ENCODE measurements at regions of chr14 and their contacts with region 1.

Region 1: DNA sequence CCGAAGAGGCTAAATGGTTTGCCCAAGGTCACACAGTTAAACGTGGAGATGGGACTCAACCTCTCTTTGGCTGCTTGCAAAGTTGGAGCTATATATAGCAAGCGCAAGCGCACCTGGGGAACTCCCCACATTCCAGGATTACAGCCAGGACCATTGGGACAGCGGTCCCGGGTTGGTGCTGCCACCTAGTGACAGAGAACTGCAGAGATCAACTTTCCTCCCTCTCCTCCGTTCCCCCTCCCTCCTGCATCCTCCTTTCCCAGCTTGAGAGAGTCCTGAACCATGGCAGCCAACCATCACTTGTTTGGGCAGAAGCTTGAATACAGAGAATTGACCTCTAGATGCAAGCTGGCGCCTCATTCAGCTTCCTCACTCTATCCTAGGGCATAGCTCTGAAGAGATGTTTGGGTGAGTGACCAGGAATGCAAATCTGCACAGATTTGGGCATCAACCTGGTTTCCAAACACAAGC is 17.4 kb upstream of the FLVCR2 start:
- DNase-seq: peak; percentile 88
- ATAC-seq: peak; percentile 99
- H3K4me3 Mint-ChIP-seq: no peak overlapping the region
- H3K27ac Mint-ChIP-seq: peak overlapping the region; percentile 14; the same call in 1 of the 2 replicates
- H3K4me1 Mint-ChIP-seq: peaks cover 12% of the 10 kb centered on the region
- H3K27me3 Mint-ChIP-seq: peaks cover 2% of the 10 kb centered on the region; the same call in 1 of the 2 replicates
- CTCF ChIP-seq: peak; percentile 68

Region 2: DNA sequence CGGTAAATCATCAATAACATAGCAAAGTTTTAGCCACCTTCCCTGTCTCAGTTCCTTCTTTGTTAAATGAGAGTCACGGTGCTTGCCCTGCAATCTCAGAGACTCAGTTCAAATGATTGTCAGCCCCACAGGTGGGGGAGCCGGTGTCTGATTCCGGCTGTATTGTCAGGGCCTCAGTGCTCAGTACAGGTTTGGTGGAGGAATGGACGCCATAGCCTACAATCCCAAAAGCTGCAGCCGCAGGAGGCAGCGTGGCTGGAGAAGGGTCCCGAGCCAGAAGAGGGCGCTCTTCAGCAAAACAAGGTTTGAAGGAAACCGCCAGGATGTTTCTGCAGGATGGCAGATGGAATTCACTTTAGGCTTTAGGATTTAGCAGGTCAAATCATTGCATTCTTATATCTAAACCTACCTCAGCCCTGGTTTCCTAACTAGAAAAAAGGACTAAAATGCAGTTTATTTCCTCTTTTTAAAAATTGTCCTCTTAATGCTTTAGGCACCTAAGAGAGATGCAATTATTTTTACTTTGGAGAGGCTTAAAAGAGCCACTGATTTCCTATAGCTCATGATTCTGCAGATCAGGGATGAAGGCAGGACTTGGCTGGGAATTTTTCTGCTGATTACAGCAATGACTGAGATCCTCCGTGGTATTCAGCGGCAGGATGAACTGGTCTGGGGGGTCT is 253.2 kb before region 1 on chr14:
- CTCF ChIA-PET with region 1: interaction called, 32 read pairs
- POLR2A ChIA-PET with region 1: no interaction called
- DNase-seq: peak; percentile 94
- ATAC-seq: peak; percentile 74
- H3K4me3 Mint-ChIP-seq: no peak overlapping the region
- H3K27ac Mint-ChIP-seq: no peak overlapping the region
- H3K4me1 Mint-ChIP-seq: peaks cover 16% of the 10 kb centered on the region
- H3K27me3 Mint-ChIP-seq: no peaks in the 10 kb centered on the region
- CTCF ChIP-seq: peak; percentile 66

Region 3: DNA sequence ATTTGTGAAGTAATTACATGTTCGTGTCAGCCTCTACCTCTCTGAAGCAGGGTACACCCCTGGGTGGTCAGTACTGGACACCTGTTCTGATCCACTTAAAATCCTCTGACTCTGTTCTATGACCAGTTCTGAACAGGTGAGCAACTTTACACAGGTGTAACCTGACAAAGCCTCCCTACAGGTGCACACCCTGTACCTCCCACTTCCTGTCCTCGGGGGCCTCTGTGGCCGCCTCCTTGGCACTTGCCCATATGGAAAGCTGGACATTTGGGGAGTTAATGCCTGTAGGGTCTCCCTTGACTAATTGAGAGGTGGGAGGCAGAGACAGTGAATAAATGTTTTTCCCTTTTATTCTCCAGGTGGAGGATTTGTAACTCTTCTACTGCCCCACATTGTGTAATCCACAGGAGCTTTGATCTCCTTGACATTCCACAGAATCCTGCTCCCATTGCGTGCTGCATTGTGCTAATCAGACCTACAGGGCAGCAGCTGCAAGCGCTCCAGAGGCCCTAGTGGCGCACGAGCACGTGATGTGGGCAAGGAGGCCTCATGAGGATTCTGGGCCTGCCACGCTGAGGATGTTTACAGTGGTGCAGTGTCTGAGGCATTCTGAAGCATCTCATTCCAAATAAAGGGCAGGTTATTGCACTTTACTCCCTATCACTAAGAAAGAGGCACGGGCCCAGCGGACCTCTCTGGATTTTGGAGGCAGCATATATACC is 84.6 kb before region 1 on chr14:
- CTCF ChIA-PET with region 1: interaction called, 15 read pairs
- POLR2A ChIA-PET with region 1: interaction called, 3 read pairs
- DNase-seq: peak; percentile 44
- ATAC-seq: peak; percentile 56
- H3K4me3 Mint-ChIP-seq: no peak overlapping the region
- H3K27ac Mint-ChIP-seq: 0 out of 2 replicates have a peak overlapping the region, but pooled peaks have one; percentile 18
- H3K4me1 Mint-ChIP-seq: peaks cover 33% of the 10 kb centered on the region
- H3K27me3 Mint-ChIP-seq: no peaks in the 10 kb centered on the region; the same call in 1 of the 2 replicates
- CTCF ChIP-seq: no peak

Region 4: GRCh38 chr14:75499084-75499875 is 61.7 kb before region 1 on chr14:
- CTCF ChIA-PET with region 1: interaction called, 13 read pairs
- POLR2A ChIA-PET with region 1: no interaction called
- DNase-seq: no peak
- ATAC-seq: no peak
- H3K4me3 Mint-ChIP-seq: no peak overlapping the region
- H3K27ac Mint-ChIP-seq: no peak overlapping the region
- H3K4me1 Mint-ChIP-seq: no peaks in the 10 kb centered on the region
- H3K27me3 Mint-ChIP-seq: no peaks in the 10 kb centered on the region
- CTCF ChIP-seq: no peak

Region 5: GRCh38 chr14:75514673-75515628 is 46.0 kb before region 1 on chr14:
- CTCF ChIA-PET with region 1: interaction called, 87 read pairs
- POLR2A ChIA-PET with region 1: no interaction called
- DNase-seq: peak; percentile 72
- ATAC-seq: peak; percentile 77
- H3K4me3 Mint-ChIP-seq: no peak overlapping the region
- H3K27ac Mint-ChIP-seq: no peak overlapping the region
- H3K4me1 Mint-ChIP-seq: peaks cover 7% of the 10 kb centered on the region
- H3K27me3 Mint-ChIP-seq: no peaks in the 10 kb centered on the region; the same call in 1 of the 2 replicates
- CTCF ChIP-seq: 0 out of 2 replicates have a peak, but pooled peaks have one; percentile 17

Region 6: GRCh38 chr14:75539561-75540478 is 21.2 kb before region 1 on chr14:
- CTCF ChIA-PET with region 1: interaction called, 16 read pairs
- POLR2A ChIA-PET with region 1: no interaction called
- DNase-seq: no peak
- ATAC-seq: no peak
- H3K4me3 Mint-ChIP-seq: no peak overlapping the region
- H3K27ac Mint-ChIP-seq: no peak overlapping the region
- H3K4me1 Mint-ChIP-seq: no peaks in the 10 kb centered on the region
- H3K27me3 Mint-ChIP-seq: no peaks in the 10 kb centered on the region
- CTCF ChIP-seq: no peak

Region 7: GRCh38 chr14:75654127-75654732 is 93.2 kb after region 1 on chr14:
- CTCF ChIA-PET with region 1: interaction called, 13 read pairs
- POLR2A ChIA-PET with region 1: no interaction called
- DNase-seq: peak; percentile 86
- ATAC-seq: peak; percentile 92
- H3K4me3 Mint-ChIP-seq: no peak overlapping the region
- H3K27ac Mint-ChIP-seq: no peak overlapping the region
- H3K4me1 Mint-ChIP-seq: peaks cover 4% of the 10 kb centered on the region; the same call in 1 of the 2 replicates
- H3K27me3 Mint-ChIP-seq: no peaks in the 10 kb centered on the region
- CTCF ChIP-seq: peak; percentile 98

Measured in WTC11 (cell line).